ENCODE measurements at regions of chr10 and their contacts with region 1.

Region 1: GRCh38 chr10:110414563-110415309 is 83.0 kb upstream of the DUSP5 start:
- DNase-seq: peak; percentile 95
- H3K4me3 Mint-ChIP-seq: peak overlapping the region; percentile 40
- H3K27ac Mint-ChIP-seq: peak overlapping the region; percentile 88
- H3K4me1 Mint-ChIP-seq: peaks cover 94% of the 10 kb centered on the region
- H3K27me3 Mint-ChIP-seq: no peaks in the 10 kb centered on the region

Region 2: GRCh38 chr10:110368002-110368401 is 46.7 kb before region 1 on chr10:
- CTCF ChIA-PET with region 1: interaction called, 3 read pairs
- POLR2A ChIA-PET with region 1: interaction called, 10 read pairs
- DNase-seq: no peak
- H3K4me3 Mint-ChIP-seq: no peak overlapping the region
- H3K27ac Mint-ChIP-seq: no peak overlapping the region
- H3K4me1 Mint-ChIP-seq: peaks cover 60% of the 10 kb centered on the region
- H3K27me3 Mint-ChIP-seq: no peaks in the 10 kb centered on the region

Region 3: GRCh38 chr10:110389255-110389654 is 25.5 kb before region 1 on chr10:
- CTCF ChIA-PET with region 1: no interaction called
- POLR2A ChIA-PET with region 1: no interaction called
- DNase-seq: no peak
- H3K4me3 Mint-ChIP-seq: no peak overlapping the region
- H3K27ac Mint-ChIP-seq: no peak overlapping the region
- H3K4me1 Mint-ChIP-seq: peaks cover 34% of the 10 kb centered on the region
- H3K27me3 Mint-ChIP-seq: no peaks in the 10 kb centered on the region

Region 4: DNA sequence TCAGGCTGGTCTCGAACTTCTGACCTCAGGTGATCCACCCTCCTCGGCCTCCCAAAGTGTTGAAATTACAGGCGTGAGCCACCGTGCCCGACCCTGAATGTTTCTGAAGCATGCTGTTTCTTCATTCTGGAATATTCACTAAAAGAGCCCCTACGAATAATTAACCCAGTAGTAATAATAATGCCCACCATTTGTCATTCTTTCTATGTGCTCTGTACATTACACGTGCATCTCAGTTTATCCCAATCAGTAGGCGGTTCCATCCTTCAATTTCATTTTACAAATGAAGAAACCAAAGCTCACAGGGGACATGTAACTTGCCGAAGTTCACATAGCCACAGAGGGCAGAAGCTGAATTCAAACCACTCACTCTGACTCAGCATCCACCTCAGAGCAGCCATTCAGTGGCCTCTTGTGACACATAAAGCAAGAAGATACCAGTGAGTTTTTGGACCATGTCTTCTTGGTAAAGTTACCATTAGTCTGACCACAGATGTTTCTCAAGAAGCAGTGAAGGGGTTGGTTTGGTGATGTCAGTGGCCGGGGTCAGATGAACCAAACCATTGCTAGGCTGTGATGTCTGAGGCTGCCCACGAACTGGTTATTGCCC is 11.1 kb after region 1 on chr10:
- CTCF ChIA-PET with region 1: interaction called, 6 read pairs
- POLR2A ChIA-PET with region 1: interaction called, 33 read pairs
- DNase-seq: peak; percentile 76
- H3K4me3 Mint-ChIP-seq: peak overlapping the region; percentile 8
- H3K27ac Mint-ChIP-seq: peak overlapping the region; percentile 74
- H3K4me1 Mint-ChIP-seq: peaks cover 84% of the 10 kb centered on the region
- H3K27me3 Mint-ChIP-seq: no peaks in the 10 kb centered on the region

Region 5: DNA sequence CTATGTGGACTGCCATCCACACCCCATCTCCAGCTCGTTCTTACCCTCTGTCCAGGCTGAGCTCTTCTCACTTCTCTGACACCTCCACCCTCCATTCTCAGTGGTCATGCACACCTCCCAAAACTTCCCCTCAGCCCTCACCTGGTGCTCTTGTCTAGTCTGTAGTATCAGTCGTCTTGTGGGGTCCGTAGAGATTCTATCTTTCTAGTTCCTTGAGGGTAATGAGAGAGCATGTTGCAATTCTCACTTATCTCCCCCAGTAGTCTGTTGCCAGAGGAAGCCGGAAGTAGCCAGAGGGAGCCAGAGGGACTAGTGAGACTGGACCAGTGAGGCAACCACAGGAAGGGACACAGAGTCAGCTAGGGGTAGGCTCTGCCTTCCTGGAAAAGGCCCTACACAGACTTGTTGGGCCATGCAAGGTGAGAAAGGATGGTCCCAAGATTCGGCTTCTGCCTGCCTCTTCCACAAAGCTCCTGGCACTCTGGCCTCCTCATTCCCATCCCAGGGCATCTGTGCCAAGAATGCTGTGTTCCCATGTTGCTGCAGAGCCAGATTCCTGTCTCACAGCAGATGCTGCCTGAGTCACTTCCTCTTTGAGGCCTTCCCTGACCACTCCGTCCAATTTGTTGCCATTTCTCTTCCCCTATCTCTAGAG is 32.3 kb after region 1 on chr10:
- CTCF ChIA-PET with region 1: interaction called, 3 read pairs
- POLR2A ChIA-PET with region 1: interaction called, 10 read pairs
- DNase-seq: no peak
- H3K4me3 Mint-ChIP-seq: no peak overlapping the region
- H3K27ac Mint-ChIP-seq: no peak overlapping the region
- H3K4me1 Mint-ChIP-seq: peaks cover 29% of the 10 kb centered on the region
- H3K27me3 Mint-ChIP-seq: peaks cover 18% of the 10 kb centered on the region